Activated CD4-positive, alpha-beta T cell treated with anti-CD3 and anti-CD28 coated beads for 36 hours (primary cell): ENCODE measurements at regions of chr2 and their contacts with region 1.

Region 1: DNA sequence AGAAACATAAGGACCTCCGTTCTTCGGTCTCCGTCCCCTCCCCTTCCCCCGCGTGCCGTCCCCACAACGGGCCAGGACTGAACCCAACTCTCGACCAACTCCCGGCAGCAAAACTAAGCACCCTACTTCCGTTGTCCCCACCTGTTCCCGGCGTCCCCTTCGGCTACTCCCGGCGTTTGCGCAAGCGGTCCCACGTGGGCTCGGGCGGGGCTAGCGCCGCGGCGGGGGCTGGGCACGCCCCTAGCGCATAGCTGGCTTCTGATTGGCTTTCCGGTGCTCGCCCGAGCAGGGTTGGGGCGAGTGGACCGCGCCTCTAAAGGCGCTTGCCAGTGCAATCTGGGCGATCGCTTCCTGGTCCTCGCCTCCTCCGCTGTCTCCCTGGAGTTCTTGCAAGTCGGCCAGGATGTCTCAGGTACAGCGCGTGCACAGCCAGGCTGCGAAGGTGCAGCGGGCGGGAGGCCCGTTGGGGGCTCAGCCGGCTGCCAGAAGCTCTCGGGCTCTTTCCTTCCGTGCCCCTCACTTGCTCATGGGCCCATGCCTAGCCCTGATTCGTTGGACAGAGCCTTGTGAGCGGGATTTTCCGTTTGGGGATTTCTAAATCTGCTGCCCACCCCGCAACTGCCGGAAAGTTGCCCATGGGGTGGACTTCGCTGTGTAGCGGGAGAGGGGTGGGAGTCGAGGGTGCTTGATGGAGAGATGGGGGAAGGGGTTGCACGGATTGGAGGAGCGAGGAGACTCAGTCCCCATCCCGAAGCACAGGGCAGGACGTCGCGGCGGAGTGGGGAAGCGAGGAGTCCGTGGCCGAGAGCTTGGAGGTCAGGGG is at the starts of genes C2orf76 and DBI:
- DNase-seq: peak; percentile 96
- ATAC-seq: peak; percentile 95
- H3K4me3 Mint-ChIP-seq: peak within 1 kb of the TSS; percentile 92
- H3K27ac Mint-ChIP-seq: peak within 1 kb of the TSS; percentile 95
- H3K4me1 Mint-ChIP-seq: peaks cover 36% of the 10 kb centered on the region
- H3K27me3 Mint-ChIP-seq: no peaks in the 10 kb centered on the region
- total RNA-seq, gene C2orf76: 8.9 to 9.9 TPM
- total RNA-seq, gene DBI: 123 to 151 TPM

Region 2: GRCh38 chr2:118013724-118014491 is 1353.0 kb before region 1 on chr2 and contains the start of gene CCDC93:
- CTCF ChIA-PET with region 1: no interaction called
- POLR2A ChIA-PET with region 1: no interaction called
- intact Hi-C with region 1: loop called in 1 of 2 experiments (anchors 5 kb)
- DNase-seq: peak; percentile 90
- ATAC-seq: peak; percentile 89
- H3K4me3 Mint-ChIP-seq: peak within 1 kb of the TSS; percentile 85
- H3K27ac Mint-ChIP-seq: peak within 1 kb of the TSS; percentile 87
- H3K4me1 Mint-ChIP-seq: peaks cover 42% of the 10 kb centered on the region
- H3K27me3 Mint-ChIP-seq: no peaks in the 10 kb centered on the region
- total RNA-seq, gene CCDC93: 26.2 to 39.5 TPM

Region 3: GRCh38 chr2:119419803-119420508 is 53.1 kb after region 1 on chr2:
- CTCF ChIA-PET with region 1: no interaction called
- POLR2A ChIA-PET with region 1: no interaction called
- intact Hi-C with region 1: loop called in 1 of 2 experiments (anchors 5 kb)
- DNase-seq: no peak
- ATAC-seq: no peak
- H3K4me3 Mint-ChIP-seq: no peak overlapping the region
- H3K27ac Mint-ChIP-seq: no peak overlapping the region
- H3K4me1 Mint-ChIP-seq: no peaks in the 10 kb centered on the region
- H3K27me3 Mint-ChIP-seq: peaks cover 25% of the 10 kb centered on the region

Region 4: GRCh38 chr2:119996148-119996547 is 629.3 kb after region 1 on chr2:
- CTCF ChIA-PET with region 1: no interaction called
- POLR2A ChIA-PET with region 1: no interaction called
- intact Hi-C with region 1: no loop called
- DNase-seq: no peak
- ATAC-seq: no peak
- H3K4me3 Mint-ChIP-seq: no peak overlapping the region
- H3K27ac Mint-ChIP-seq: no peak overlapping the region
- H3K4me1 Mint-ChIP-seq: no peaks in the 10 kb centered on the region
- H3K27me3 Mint-ChIP-seq: peaks cover 5% of the 10 kb centered on the region

Region 5: DNA sequence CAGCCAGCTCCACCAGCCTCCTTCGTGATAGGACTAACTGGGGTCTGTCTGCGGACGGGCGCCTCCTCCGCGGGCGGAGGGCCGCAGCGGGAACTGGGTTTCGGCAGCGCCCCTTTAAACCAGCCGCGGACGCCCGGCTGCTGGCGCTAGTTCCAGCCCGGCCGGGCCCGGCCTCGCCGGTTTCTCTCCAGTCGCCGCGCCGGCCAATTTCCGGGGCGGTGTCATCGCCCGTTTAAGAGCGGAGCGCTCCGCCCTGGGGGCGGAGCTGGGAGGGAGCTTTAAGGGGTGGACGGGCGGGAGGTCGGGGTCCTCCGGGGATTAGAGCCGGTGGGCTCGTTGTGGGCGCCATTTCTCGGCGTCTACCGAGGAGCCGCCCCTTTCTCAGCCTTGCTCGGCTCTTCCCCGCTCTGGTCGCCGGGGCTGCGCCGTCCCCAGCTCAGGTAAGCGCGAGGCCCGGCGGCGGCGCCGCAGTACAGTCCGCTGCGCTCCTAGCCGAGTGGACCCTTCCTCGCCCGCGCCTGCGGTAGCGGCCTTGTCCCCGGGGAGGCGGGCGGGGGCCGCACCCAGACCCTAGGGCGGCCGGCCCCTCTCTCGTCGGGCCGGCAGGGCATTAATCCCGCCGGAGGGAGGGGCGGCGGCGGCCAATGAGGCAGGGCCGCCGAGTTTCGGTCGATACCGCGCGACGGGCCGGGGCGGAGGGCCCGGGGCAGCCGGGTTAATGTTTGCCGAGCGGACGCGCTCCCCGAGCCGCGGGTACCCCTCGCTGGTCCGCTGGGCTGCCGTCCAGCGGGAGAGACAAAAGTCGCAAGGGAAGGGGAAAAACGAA is 646.1 kb after region 1 on chr2 and contains the start of gene EPB41L5:
- CTCF ChIA-PET with region 1: no interaction called
- POLR2A ChIA-PET with region 1: no interaction called
- intact Hi-C with region 1: loop called in 1 of 2 experiments (anchors 5 kb)
- DNase-seq: peak; percentile 90
- ATAC-seq: peak; percentile 95
- H3K4me3 Mint-ChIP-seq: peak within 1 kb of the TSS; percentile 73
- H3K27ac Mint-ChIP-seq: peak within 1 kb of the TSS; percentile 66
- H3K4me1 Mint-ChIP-seq: peaks cover 19% of the 10 kb centered on the region
- H3K27me3 Mint-ChIP-seq: no peaks in the 10 kb centered on the region
- total RNA-seq, gene EPB41L5: 2.2 to 2.4 TPM

Region 6: GRCh38 chr2:120252225-120253021 is 885.6 kb after region 1 on chr2 and contains the start of gene RALB:
- CTCF ChIA-PET with region 1: no interaction called
- POLR2A ChIA-PET with region 1: no interaction called
- intact Hi-C with region 1: loop called in 1 of 2 experiments (anchors 2 kb)
- DNase-seq: peak; percentile 100
- ATAC-seq: peak; percentile 95
- H3K4me3 Mint-ChIP-seq: peak within 1 kb of the TSS; percentile 92
- H3K27ac Mint-ChIP-seq: peak within 1 kb of the TSS; percentile 86
- H3K4me1 Mint-ChIP-seq: peaks cover 41% of the 10 kb centered on the region
- H3K27me3 Mint-ChIP-seq: peaks cover 6% of the 10 kb centered on the region
- total RNA-seq, gene RALB: 34.0 to 34.3 TPM